ENCODE measurements at regions of chr20 and their contacts with region 1.

Region 1: GRCh38 chr20:6525447-6526303 is 241.8 kb upstream of the BMP2 start:
- DNase-seq: no peak
- ATAC-seq: no peak
- H3K4me3 ChIP-seq: no peak overlapping the region
- H3K27ac ChIP-seq: no peak overlapping the region
- H3K4me1 ChIP-seq: no peaks in the 10 kb centered on the region
- H3K27me3 ChIP-seq: no peaks in the 10 kb centered on the region
- CTCF ChIP-seq: no peak
- POLR2A ChIP-seq: no peak

Region 2: GRCh38 chr20:6434131-6434530 is 91.5 kb before region 1 on chr20:
- intact Hi-C with region 1: no loop called
- DNase-seq: no peak
- ATAC-seq: no peak
- H3K4me3 ChIP-seq: no peak overlapping the region
- H3K27ac ChIP-seq: no peak overlapping the region
- H3K4me1 ChIP-seq: no peaks in the 10 kb centered on the region
- H3K27me3 ChIP-seq: no peaks in the 10 kb centered on the region
- CTCF ChIP-seq: no peak
- POLR2A ChIP-seq: no peak

Region 3: GRCh38 chr20:6473197-6473596 is 52.5 kb before region 1 on chr20:
- intact Hi-C with region 1: loop called in 1 of 10 experiments (anchors 10 kb)
- DNase-seq: no peak
- ATAC-seq: no peak
- H3K4me3 ChIP-seq: no peak overlapping the region
- H3K27ac ChIP-seq: no peak overlapping the region
- H3K4me1 ChIP-seq: no peaks in the 10 kb centered on the region
- H3K27me3 ChIP-seq: no peaks in the 10 kb centered on the region
- CTCF ChIP-seq: no peak
- POLR2A ChIP-seq: no peak